ENCODE measurements at regions of chr3 and their contacts with region 1.

Region 1: DNA sequence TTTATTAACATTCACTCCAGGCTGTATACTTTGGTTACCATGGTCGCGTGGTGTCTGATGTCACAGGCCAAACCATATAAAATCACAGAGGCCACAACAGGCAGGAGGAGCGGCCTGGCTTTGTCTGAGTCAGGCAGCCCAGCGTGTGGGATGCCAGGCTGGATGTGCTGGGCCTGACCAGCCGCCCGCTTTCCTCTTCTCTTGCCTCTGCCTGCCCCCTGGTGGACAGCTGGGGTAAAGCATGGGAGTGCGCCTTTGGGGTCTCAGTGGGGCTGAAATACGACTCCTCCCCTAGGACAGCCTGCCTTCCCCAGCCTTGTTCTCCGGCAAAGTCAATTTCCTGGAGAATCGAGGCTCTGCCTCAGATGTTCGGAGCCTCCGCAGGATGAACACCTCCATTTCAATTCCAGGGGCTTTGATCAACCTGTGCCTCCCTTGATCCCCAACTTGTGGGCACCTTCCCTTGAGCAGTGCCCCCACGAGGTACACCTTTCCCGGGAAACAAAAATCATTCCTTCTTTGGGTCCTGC is 78.2 kb downstream of the CCNL1 start:
- DNase-seq: peak; percentile 92 to 94
- H3K4me3 ChIP-seq: no peak overlapping the region
- H3K27ac ChIP-seq: peak overlapping the region; percentile 50 to 53
- H3K4me1 ChIP-seq: peaks cover 0 to 38% (median 30%) of the 10 kb centered on the region in 4 donors
- H3K27me3 ChIP-seq: no peaks in the 10 kb centered on the region
- CTCF ChIP-seq: peak; percentile 93 to 99

Region 2: GRCh38 chr3:156005736-156006135 is 1076.0 kb before region 1 on chr3:
- intact Hi-C with region 1: loop called (anchors 10 kb)
- DNase-seq: no peak
- H3K4me3 ChIP-seq: no peak overlapping the region
- H3K27ac ChIP-seq: no peak overlapping the region
- H3K4me1 ChIP-seq: no peaks in the 10 kb centered on the region
- H3K27me3 ChIP-seq: no peaks in the 10 kb centered on the region
- CTCF ChIP-seq: no peak

Region 3: GRCh38 chr3:156151824-156152428 is 929.8 kb before region 1 on chr3:
- intact Hi-C with region 1: loop called (anchors 5 kb)
- DNase-seq: peak; percentile 59 to 81
- H3K4me3 ChIP-seq: peak overlapping the region; percentile 3 to 5
- H3K27ac ChIP-seq: peak overlapping the region; percentile 70 to 73
- H3K4me1 ChIP-seq: peaks cover 0 to 97% (median 46%) of the 10 kb centered on the region in 4 donors
- H3K27me3 ChIP-seq: no peaks in the 10 kb centered on the region
- CTCF ChIP-seq: peak; percentile 73 to 77

Region 4: GRCh38 chr3:156535162-156535627 is 546.6 kb before region 1 on chr3:
- intact Hi-C with region 1: loop called (anchors 5 kb)
- DNase-seq: peak; percentile 80 to 83
- H3K4me3 ChIP-seq: no peak overlapping the region
- H3K27ac ChIP-seq: peak overlapping the region; percentile 46 to 69
- H3K4me1 ChIP-seq: peaks cover 0 to 13% (median 9%) of the 10 kb centered on the region in 4 donors
- H3K27me3 ChIP-seq: no peaks in the 10 kb centered on the region
- CTCF ChIP-seq: peak; percentile 31 to 48

Region 5: GRCh38 chr3:156674046-156674910 is 407.5 kb before region 1 on chr3 and contains the start of gene TIPARP:
- intact Hi-C with region 1: loop called (anchors 2 kb)
- DNase-seq: peak; percentile 99 to 100
- H3K4me3 ChIP-seq: peak within 1 kb of the TSS; percentile 87 to 95
- H3K27ac ChIP-seq: peak within 1 kb of the TSS; percentile 95 to 98
- H3K4me1 ChIP-seq: peaks cover 0 to 34% (median 10%) of the 10 kb centered on the region in 4 donors
- H3K27me3 ChIP-seq: no peaks in the 10 kb centered on the region
- CTCF ChIP-seq: peak; percentile 76 to 79

Region 6: GRCh38 chr3:156816800-156817645 is 264.7 kb before region 1 on chr3:
- intact Hi-C with region 1: loop called (anchors 5 kb)
- DNase-seq: peak; percentile 74 to 84
- H3K4me3 ChIP-seq: peak overlapping the region; percentile 69 to 81
- H3K27ac ChIP-seq: peak overlapping the region; percentile 80 to 90
- H3K4me1 ChIP-seq: peaks cover 0 to 19% (median 12%) of the 10 kb centered on the region in 4 donors
- H3K27me3 ChIP-seq: no peaks in the 10 kb centered on the region
- CTCF ChIP-seq: peak in 1 of 2 experiments; percentile 7

Region 7: GRCh38 chr3:157136647-157137387 is 55.1 kb after region 1 on chr3:
- intact Hi-C with region 1: loop called (anchors 2 kb)
- DNase-seq: peak in 1 of 2 donors; percentile 27
- H3K4me3 ChIP-seq: no peak overlapping the region
- H3K27ac ChIP-seq: peak overlapping the region; percentile 72 to 87
- H3K4me1 ChIP-seq: peaks cover 0 to 54% (median 37%) of the 10 kb centered on the region in 4 donors
- H3K27me3 ChIP-seq: no peaks in the 10 kb centered on the region
- CTCF ChIP-seq: no peak

Measured in tibial artery (tissue), 4 donors.